CD4-positive, alpha-beta T cell (primary cell): ENCODE measurements at regions of chr4 and their contacts with region 1.

Region 1: DNA sequence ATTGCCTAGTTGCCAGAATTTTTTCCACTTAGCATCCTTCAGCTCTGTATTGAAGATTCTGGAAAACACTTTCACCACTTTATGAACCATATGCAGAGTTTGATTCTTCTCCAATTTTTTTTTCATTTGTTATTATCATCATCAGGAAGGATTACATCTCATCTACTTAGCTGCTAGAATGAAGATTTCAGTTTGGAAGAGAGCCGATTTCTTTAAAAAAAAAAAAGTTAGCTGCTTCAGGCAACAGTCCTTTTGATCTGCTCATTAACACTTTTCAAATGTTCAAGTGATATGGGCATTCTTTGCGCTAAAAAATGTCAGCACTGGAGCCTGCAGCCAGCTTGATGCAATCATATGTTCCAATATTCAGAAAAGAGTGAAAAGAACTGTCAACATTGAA is 76.2 kb downstream of the ANTXR2 start:
- DNase-seq: no peak
- ATAC-seq: no peak
- H3K4me3 ChIP-seq: no peak overlapping the region
- H3K4me3 Mint-ChIP-seq: no peak overlapping the region
- H3K27ac ChIP-seq: no peak overlapping the region
- H3K27ac Mint-ChIP-seq: no peak overlapping the region
- H3K4me1 ChIP-seq: no peaks in the 10 kb centered on the region
- H3K4me1 Mint-ChIP-seq: peaks cover 50% of the 10 kb centered on the region
- H3K27me3 ChIP-seq: no peaks in the 10 kb centered on the region
- H3K27me3 Mint-ChIP-seq: no peaks in the 10 kb centered on the region
- CTCF ChIP-seq: no peak

Region 2: GRCh38 chr4:79958466-79959264 is 38.2 kb before region 1 on chr4:
- CTCF ChIA-PET with region 1: no interaction called
- POLR2A ChIA-PET with region 1: no interaction called
- intact Hi-C with region 1: loop called in 1 of 2 experiments (anchors 5 kb)
- DNase-seq: no peak
- ATAC-seq: no peak
- H3K4me3 ChIP-seq: no peak overlapping the region
- H3K4me3 Mint-ChIP-seq: no peak overlapping the region
- H3K27ac ChIP-seq: no peak overlapping the region
- H3K27ac Mint-ChIP-seq: no peak overlapping the region
- H3K4me1 ChIP-seq: no peaks in the 10 kb centered on the region
- H3K4me1 Mint-ChIP-seq: no peaks in the 10 kb centered on the region
- H3K27me3 ChIP-seq: no peaks in the 10 kb centered on the region
- H3K27me3 Mint-ChIP-seq: no peaks in the 10 kb centered on the region
- CTCF ChIP-seq: no peak